ENCODE measurements at regions of chr17 and their contacts with region 1.

Region 1: GRCh38 chr17:56679115-56679766 is 85.7 kb downstream of the NOG start:
- DNase-seq: no peak
- ATAC-seq: peak in 2 of 4 donors; percentile 53 to 69
- H3K4me3 ChIP-seq: peak overlapping the region in 10 of 12 donors; percentile 11 to 46 (median 34)
- H3K27ac ChIP-seq: no peak overlapping the region
- H3K4me1 ChIP-seq: peaks cover 0 to 23% (median 6%) of the 10 kb centered on the region in 12 donors
- H3K27me3 ChIP-seq: peaks cover 7 to 85% (median 28%) of the 10 kb centered on the region in 9 donors
- CTCF ChIP-seq: peak; percentile 30 to 64 (median 50)
- POLR2A ChIP-seq: no peak

Region 2: GRCh38 chr17:55845385-55845784 is 833.9 kb before region 1 on chr17:
- intact Hi-C with region 1: loop called in 1 of 10 experiments (anchors 5 kb)
- DNase-seq: peak; percentile 27 to 69 (median 49)
- ATAC-seq: peak; percentile 71 to 93 (median 80)
- H3K4me3 ChIP-seq: peak overlapping the region in 9 of 12 donors; percentile 15 to 36 (median 32)
- H3K27ac ChIP-seq: no peak overlapping the region
- H3K4me1 ChIP-seq: peaks cover 0 to 6% (median 0%) of the 10 kb centered on the region in 12 donors
- H3K27me3 ChIP-seq: no peaks in the 10 kb centered on the region
- CTCF ChIP-seq: peak; percentile 33 to 73 (median 56)
- POLR2A ChIP-seq: no peak

Region 3: DNA sequence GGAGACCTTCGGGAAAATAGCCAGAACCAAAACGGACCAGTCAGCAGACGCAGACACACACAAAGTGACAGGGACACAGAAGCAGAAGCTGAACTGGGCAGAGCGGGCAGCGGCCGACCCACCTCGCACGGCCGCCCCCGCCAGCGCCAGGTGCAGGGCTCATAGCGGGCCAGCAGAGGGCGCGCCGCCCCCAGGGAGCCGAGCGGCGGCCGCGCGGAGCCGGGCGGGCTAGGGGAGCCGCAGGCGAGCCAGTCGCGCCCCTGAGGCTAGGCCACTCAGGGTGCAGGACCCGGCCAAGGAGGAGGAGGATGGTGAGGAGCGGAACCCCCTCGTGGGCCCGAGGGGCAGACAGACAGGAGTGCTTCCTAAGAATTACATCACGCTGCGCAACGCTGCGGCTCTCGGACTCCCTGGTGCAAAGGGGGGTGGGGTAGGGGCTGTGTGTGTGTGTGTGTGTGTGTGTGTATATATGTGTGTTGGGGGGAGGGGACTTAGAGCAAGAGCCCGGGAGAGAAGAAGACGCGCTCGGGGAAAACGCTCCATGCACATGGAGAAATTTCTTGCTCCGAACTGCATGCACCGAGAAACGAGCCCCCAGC is 86.7 kb before region 1 on chr17:
- intact Hi-C with region 1: loop called in 5 of 10 experiments (anchors 1 to 5 kb)
- DNase-seq: peak; percentile 35 to 86 (median 59)
- ATAC-seq: peak; percentile 55 to 85 (median 82)
- H3K4me3 ChIP-seq: peak overlapping the region; percentile 42 to 71 (median 56)
- H3K27ac ChIP-seq: no peak overlapping the region
- H3K4me1 ChIP-seq: peaks cover 4 to 56% (median 22%) of the 10 kb centered on the region in 12 donors
- H3K27me3 ChIP-seq: peaks cover 5 to 69% (median 37%) of the 10 kb centered on the region in 9 donors
- CTCF ChIP-seq: peak; percentile 72 to 99 (median 97)
- POLR2A ChIP-seq: no peak

Region 4: DNA sequence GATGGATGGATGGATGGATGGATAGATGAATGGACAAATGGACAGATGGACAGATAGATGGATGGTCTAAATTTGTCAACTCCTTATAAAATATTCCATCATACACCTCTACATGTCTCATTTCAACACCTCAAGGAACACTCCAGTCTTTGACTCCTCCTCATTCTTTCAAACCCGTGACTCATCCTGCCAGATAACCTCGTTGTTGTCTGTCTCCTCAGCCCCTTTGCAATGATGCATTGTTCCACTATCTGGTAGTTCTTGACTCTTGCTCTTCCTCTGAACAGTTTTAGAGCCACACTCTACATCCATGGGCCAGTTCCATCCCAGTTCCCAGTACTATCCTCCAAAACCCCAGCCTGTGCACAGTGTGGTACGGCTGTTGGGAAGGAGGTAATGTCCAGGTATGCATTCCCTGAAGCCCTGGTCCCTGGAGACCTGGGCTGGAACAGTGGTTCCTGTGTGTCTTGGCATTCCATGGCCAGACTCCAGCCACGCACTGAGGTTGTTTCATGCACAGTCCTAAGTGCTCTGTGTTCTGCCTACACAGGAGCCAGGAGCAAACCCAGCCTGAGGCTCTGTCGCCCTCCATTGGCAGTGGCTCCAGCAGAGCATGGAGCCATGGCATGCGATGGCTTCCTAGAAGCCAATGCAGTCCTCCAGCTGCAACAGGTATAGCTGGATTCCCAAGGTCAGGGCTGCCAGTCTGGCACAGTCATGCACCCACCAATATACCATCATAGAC is 48.8 kb after region 1 on chr17:
- intact Hi-C with region 1: no loop called
- DNase-seq: no peak
- ATAC-seq: no peak
- H3K4me3 ChIP-seq: no peak overlapping the region
- H3K27ac ChIP-seq: no peak overlapping the region
- H3K4me1 ChIP-seq: no peaks in the 10 kb centered on the region
- H3K27me3 ChIP-seq: peaks cover 0 to 9% (median 0%) of the 10 kb centered on the region in 9 donors
- CTCF ChIP-seq: no peak
- POLR2A ChIP-seq: no peak

Region 5: GRCh38 chr17:57084802-57085447 is 405.7 kb after region 1 on chr17 and contains the start of gene AKAP1:
- intact Hi-C with region 1: no loop called
- DNase-seq: peak; percentile 96 to 99 (median 97)
- ATAC-seq: peak; percentile 89 to 95 (median 92)
- H3K4me3 ChIP-seq: peak within 1 kb of the TSS; percentile 63 to 98 (median 78)
- H3K27ac ChIP-seq: peak within 1 kb of the TSS; percentile 83 to 99 (median 95)
- H3K4me1 ChIP-seq: peaks cover 0 to 51% (median 27%) of the 10 kb centered on the region in 12 donors
- H3K27me3 ChIP-seq: no peaks in the 10 kb centered on the region
- CTCF ChIP-seq: peak in 11 of 12 donors; percentile 10 to 49 (median 30)
- POLR2A ChIP-seq: peak; percentile 31 to 95
- total RNA-seq, gene AKAP1: 77.4 to 240 (median 133) TPM

Measured in heart left ventricle (tissue), 16 donors.